Right ventricle myocardium superior (tissue), 1 donor: ENCODE measurements at regions of chr14 and their contacts with region 1.

Region 1: DNA sequence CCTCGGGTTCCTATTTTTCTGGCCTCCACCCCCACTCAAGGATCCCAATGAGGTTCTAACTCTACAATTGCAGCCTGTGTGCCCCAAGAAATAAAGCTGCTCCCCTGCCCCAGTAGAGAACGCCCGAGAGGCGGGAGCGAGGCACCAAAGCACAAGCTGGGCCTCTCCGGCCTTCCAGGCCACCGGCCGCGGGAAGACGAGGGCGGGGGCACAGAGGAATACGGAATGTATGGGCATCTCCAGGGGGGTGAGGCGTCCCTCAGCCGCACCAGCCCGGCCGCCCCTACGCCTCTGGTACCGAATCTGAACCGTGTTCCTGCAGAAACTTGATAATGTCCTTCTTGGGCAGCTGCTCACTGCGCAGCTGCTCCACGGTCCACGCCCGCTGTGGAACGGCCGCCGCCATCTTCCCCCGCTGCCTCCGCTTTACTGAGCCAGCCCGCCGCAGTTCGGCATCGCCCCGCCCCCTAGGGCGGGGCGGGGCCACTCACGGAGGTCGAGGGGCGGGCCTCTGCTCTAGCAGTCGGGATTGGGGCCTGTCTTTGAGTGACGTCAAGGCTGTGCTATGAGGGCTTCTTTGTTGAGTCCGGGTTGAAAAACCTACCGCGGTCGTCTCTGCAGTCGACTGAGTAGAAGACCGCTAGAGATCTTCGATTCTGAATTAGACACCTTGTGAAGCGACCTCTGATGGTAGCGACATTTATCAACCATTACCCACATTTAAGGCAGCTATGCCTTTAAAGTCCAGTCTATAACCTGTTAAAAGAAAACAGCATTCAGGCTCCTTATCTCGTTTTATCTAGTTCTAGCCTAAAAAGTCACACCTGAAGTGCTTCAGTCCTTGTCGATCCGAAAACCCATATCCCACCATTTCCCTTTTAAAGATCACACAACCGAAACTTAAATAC is at the start of gene FKBP3:
- DNase-seq: peak; percentile 97
- ATAC-seq: peak; percentile 97
- total RNA-seq, gene FKBP3: 124 TPM

Region 2: GRCh38 chr14:44886860-44887595 is 247.3 kb before region 1 on chr14:
- intact Hi-C with region 1: no loop called
- DNase-seq: no peak
- ATAC-seq: no peak

Region 3: GRCh38 chr14:44897845-44898151 is 236.5 kb before region 1 on chr14:
- intact Hi-C with region 1: loop called (anchors 2 kb)
- DNase-seq: no peak
- ATAC-seq: no peak

Region 4: DNA sequence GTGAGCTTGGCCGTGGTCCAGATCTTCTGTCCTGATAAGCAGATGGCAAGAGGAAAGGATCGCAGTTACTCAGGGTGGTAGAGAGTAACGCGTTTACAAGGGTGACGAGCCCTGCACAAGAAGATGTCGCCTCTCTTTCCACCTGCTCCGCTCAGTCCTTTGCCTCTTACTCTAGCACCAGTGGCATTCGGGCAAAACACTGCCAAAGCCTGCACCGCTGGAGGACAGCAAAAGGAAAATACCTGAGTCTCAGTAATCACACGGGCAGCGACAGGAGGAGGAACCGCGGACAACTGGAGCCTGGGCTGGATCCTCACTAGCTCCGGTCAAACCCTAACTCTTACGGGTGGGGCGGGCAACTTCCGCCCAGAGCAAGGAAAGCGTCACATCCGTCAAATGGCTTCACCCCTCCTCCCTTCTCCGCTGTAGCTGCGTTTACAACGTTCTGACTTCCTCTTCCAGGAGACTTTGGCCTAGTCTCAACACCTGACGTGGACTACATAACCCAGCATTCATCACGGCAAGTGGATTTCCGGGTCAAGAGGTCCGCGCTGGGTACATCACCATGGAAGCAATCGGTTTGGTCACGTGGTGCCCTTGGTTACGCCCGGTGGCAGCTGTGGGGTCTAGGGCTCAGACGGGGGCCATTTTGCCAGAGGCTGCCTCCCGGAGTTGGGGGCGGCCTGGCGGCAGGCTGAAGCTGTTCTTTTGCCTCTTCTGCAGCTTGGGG is 172.5 kb before region 1 on chr14 and contains the starts of genes KLHL28 and TOGARAM1:
- intact Hi-C with region 1: loop called (anchors 10 kb)
- DNase-seq: peak; percentile 96
- ATAC-seq: peak; percentile 95
- total RNA-seq, gene KLHL28: 12.2 TPM
- total RNA-seq, gene TOGARAM1: 20.0 TPM